Psoas muscle (tissue), 8 donors: ENCODE measurements at regions of chr6 and their contacts with region 1.

Region 1: DNA sequence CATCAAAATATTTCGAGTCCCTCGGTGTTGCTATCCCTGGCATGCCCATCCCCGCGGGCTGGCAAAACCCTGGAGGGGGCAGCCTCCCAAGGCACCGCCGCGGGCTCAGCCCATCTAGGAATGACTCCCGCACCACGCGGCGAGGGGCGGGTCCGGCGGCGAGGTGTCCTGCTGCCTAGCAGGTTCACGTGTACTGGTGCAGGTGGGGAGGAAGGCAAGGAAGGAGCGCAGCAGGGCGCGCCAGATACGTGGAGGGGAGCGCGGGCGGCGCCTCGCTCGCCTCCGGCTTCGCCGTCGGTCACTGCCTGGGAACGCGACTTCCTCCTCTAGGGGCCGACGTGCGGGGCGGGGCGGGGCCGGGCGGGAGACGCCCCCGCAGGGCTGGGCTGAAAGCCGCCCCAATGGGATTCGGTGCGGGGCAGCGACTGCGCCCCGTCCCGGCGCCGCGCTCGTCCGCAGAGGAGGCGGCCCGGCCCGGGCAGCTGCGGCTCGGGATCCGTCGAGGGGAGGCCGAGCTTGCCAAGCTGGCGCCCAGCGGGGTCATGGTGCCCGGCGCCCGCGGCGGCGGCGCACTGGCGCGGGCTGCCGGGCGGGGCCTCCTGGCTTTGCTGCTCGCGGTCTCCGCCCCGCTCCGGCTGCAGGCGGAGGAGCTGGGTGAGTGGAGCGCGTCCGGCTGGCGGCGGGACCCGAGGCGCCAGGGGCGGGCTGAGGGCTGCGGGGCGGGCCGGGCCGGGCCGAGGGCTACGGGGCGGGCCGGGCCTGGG is at the start of gene DCBLD1:
- DNase-seq: peak; percentile 80 to 87
- ATAC-seq: peak; percentile 81 to 86 (median 82)
- H3K4me3 ChIP-seq: peak within 1 kb of the TSS; percentile 88
- H3K27ac ChIP-seq: peak within 1 kb of the TSS; percentile 93
- H3K4me1 ChIP-seq: peaks cover 13% of the 10 kb centered on the region
- H3K27me3 ChIP-seq: no peaks in the 10 kb centered on the region
- CTCF ChIP-seq: peak; percentile 5
- total RNA-seq, gene DCBLD1: 4.0 to 9.0 (median 5.2) TPM

Region 2: DNA sequence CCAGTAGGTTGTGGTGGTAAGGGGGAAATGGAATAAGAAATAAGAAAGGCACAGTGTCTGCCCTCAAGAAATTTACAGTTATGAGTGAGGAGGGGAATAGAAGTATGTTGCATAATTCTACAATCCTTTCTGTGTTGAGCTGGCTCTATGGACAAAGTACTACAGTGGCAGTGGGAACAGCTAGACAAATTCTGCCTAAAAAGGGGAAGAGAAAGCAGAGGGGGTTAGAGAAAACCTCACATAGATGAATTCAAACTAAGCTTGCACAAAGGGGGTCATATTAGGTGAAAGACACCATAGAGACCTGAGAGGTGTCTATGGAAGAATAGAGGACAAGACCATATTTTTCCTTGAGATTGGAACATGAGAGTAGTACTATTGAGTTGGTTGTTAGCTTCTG is 363.9 kb before region 1 on chr6:
- intact Hi-C with region 1: no loop called
- DNase-seq: no peak
- ATAC-seq: no peak
- H3K4me3 ChIP-seq: no peak overlapping the region
- H3K27ac ChIP-seq: no peak overlapping the region
- H3K4me1 ChIP-seq: no peaks in the 10 kb centered on the region
- H3K27me3 ChIP-seq: no peaks in the 10 kb centered on the region
- CTCF ChIP-seq: no peak

Region 3: GRCh38 chr6:117200067-117200466 is 282.4 kb before region 1 on chr6:
- intact Hi-C with region 1: no loop called
- DNase-seq: peak in 1 of 2 donors; percentile 67
- ATAC-seq: peak; percentile 65 to 88 (median 82)
- H3K4me3 ChIP-seq: no peak overlapping the region
- H3K27ac ChIP-seq: peak overlapping the region; percentile 61
- H3K4me1 ChIP-seq: peaks cover 17% of the 10 kb centered on the region
- H3K27me3 ChIP-seq: no peaks in the 10 kb centered on the region
- CTCF ChIP-seq: no peak

Region 4: DNA sequence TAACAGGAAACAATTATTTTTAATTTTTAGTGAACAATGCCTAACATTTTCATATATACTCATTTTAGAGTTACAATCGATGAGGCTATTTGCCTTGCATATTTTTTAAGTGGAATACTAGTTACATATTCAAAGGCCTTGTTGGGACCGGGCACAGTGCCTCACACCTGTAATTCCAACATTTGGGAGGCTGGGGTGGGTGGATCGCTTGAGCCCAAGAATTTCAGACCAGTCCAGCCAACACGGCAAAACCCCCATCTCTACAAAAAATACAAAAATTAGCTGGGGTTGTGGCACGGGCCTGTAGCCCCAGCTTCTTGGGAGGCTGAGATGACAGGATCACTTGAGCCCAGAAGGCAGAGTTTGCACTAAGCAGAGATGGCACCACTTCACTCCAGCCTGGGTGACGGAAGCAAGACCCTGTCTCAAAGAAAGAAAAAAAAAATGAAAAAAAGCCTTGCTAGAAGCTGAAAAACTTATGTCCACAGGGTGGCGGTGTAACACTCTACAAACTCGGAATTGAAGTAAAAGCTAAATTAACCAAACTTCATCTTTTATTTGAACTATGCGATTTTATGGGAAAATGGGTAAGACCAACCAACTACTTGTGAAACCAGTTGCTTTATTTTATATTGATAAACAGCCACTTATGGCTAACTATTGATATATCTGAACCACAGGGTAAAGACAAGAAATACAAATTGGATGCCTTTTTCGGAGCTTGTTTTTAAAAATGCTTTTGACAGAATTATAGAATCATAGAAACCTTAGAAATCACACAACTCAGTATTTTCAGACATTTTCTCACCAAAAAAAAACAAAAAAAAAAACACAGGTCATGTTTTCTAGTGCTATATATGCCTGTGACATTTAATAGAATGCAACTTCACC is 32.6 kb before region 1 on chr6:
- intact Hi-C with region 1: loop called in 1 of 2 experiments (anchors 5 kb)
- DNase-seq: no peak
- ATAC-seq: peak in 1 of 4 donors; percentile 72
- H3K4me3 ChIP-seq: no peak overlapping the region
- H3K27ac ChIP-seq: no peak overlapping the region
- H3K4me1 ChIP-seq: peaks cover 12% of the 10 kb centered on the region
- H3K27me3 ChIP-seq: no peaks in the 10 kb centered on the region
- CTCF ChIP-seq: peak; percentile 84

Region 5: GRCh38 chr6:117547688-117548621 is 65.5 kb after region 1 on chr6:
- intact Hi-C with region 1: loop called in 1 of 2 experiments (anchors 5 kb)
- DNase-seq: peak; percentile 78 to 91
- ATAC-seq: peak; percentile 92 to 96 (median 94)
- H3K4me3 ChIP-seq: peak overlapping the region; percentile 72
- H3K27ac ChIP-seq: peak overlapping the region; percentile 85
- H3K4me1 ChIP-seq: peaks cover 2% of the 10 kb centered on the region
- H3K27me3 ChIP-seq: no peaks in the 10 kb centered on the region
- CTCF ChIP-seq: peak; percentile 9

Region 6: DNA sequence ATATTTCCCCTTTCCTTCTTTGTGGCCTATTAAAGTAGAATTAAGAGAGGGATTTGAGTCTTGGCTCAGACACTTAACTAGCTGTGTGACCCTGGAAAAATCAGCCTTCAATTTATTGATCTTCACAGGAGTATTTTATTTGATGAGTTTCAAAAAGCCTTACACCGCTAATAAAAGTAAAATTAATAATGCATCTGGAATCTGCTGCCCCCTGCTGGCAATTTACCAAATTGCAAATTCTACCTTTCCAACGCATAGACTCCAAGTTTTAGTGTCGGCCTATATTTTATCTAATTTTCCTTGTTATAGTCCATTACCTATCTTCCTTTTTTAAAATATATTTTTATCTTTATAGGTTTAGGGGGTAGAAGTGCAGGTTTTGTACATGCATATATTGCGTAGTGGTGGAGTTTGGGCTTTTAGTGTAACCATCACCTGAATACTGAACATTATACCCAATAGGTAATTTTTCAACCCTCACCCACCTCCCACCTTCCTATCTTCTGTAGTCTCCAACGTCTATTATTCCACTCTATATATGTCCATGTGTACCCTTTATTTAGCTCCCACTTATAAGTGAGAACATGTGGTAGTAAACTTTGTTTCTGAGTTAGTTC is 73.6 kb after region 1 on chr6:
- intact Hi-C with region 1: loop called in 1 of 2 experiments (anchors 2 kb)
- DNase-seq: no peak
- ATAC-seq: peak in 1 of 4 donors; percentile 73
- H3K4me3 ChIP-seq: no peak overlapping the region
- H3K27ac ChIP-seq: no peak overlapping the region
- H3K4me1 ChIP-seq: peaks cover 7% of the 10 kb centered on the region
- H3K27me3 ChIP-seq: no peaks in the 10 kb centered on the region
- CTCF ChIP-seq: peak; percentile 90

Region 7: DNA sequence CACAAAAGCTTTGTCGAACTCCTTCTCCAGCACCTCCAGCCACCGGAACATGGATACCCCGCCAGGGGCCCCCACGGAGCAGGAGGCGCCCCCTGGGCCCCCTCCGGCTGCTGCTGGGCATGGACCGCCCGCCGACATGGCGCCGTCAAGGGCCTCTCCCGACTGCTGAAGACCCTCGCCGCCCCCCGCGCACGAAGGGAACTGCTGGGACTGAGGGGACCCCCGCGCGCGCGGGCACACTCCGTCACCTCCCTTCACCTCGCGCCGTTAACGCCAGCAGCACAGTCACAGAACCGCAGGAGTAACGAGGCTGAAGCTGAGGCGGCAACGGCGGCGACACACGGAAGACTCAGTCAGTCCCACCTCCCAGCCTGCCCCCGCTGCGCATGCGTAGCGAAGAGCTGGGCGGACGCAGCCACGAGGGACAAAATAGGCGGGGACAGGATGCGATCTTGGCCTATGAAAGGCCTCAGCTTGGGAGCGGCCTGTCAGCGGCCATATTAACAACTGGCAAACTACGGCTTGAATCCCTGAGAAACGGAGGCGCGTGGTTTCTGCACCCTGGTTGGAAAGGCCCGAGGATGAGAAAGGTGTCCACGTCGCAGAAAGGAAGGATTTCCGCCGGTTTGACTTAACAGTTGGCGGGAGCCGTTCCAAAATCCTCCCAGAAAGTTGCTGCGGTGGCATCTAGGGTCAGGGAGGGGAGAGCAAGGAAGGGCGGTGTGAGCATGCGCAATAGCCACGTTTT is 119.9 kb after region 1 on chr6 and contains the start of gene GOPC:
- intact Hi-C with region 1: loop called in 1 of 2 experiments (anchors 5 kb)
- DNase-seq: peak; percentile 95 to 98
- ATAC-seq: peak; percentile 99
- H3K4me3 ChIP-seq: peak within 1 kb of the TSS; percentile 89
- H3K27ac ChIP-seq: peak within 1 kb of the TSS; percentile 96
- H3K4me1 ChIP-seq: peaks cover 28% of the 10 kb centered on the region
- H3K27me3 ChIP-seq: no peaks in the 10 kb centered on the region
- CTCF ChIP-seq: no peak
- total RNA-seq, gene GOPC: 11.5 to 18.2 (median 15.6) TPM

Region 8: GRCh38 chr6:117706504-117706903 is 224.1 kb after region 1 on chr6:
- intact Hi-C with region 1: no loop called
- DNase-seq: no peak
- ATAC-seq: no peak
- H3K4me3 ChIP-seq: no peak overlapping the region
- H3K27ac ChIP-seq: no peak overlapping the region
- H3K4me1 ChIP-seq: no peaks in the 10 kb centered on the region
- H3K27me3 ChIP-seq: no peaks in the 10 kb centered on the region
- CTCF ChIP-seq: no peak